Stomach (tissue), 19 donors: ENCODE measurements at regions of chr5 and their contacts with region 1.

Region 1: GRCh38 chr5:172454358-172455086 is at the start of gene SH3PXD2B:
- DNase-seq: peak; percentile 63 to 90
- H3K4me3 ChIP-seq: peak within 1 kb of the TSS; percentile 85 to 95 (median 89)
- H3K27ac ChIP-seq: peak within 1 kb of the TSS; percentile 80 to 94 (median 88)
- H3K4me1 ChIP-seq: peaks cover 15 to 56% (median 38%) of the 10 kb centered on the region in 4 donors
- H3K27me3 ChIP-seq: peaks cover 0 to 11% (median 0%) of the 10 kb centered on the region in 3 donors
- CTCF ChIP-seq: no peak
- EP300 ChIP-seq: no peak
- POLR2A ChIP-seq: no peak
- total RNA-seq, gene SH3PXD2B: 7.2 to 63.0 (median 35.1) TPM

Region 2: GRCh38 chr5:171850324-171851285 is 603.9 kb before region 1 on chr5:
- intact Hi-C with region 1: no loop called
- DNase-seq: peak in 1 of 2 donors; percentile 52
- H3K4me3 ChIP-seq: no peak overlapping the region
- H3K27ac ChIP-seq: no peak overlapping the region
- H3K4me1 ChIP-seq: no peaks in the 10 kb centered on the region
- H3K27me3 ChIP-seq: no peaks in the 10 kb centered on the region
- CTCF ChIP-seq: no peak
- EP300 ChIP-seq: no peak
- POLR2A ChIP-seq: no peak

Region 3: GRCh38 chr5:172564188-172564587 is 109.7 kb after region 1 on chr5:
- intact Hi-C with region 1: no loop called
- DNase-seq: peak; percentile 79 to 90
- H3K4me3 ChIP-seq: no peak overlapping the region
- H3K27ac ChIP-seq: peak overlapping the region in 1 of 5 donors; percentile 14
- H3K4me1 ChIP-seq: peaks cover 6 to 24% (median 16%) of the 10 kb centered on the region in 4 donors
- H3K27me3 ChIP-seq: no peaks in the 10 kb centered on the region
- CTCF ChIP-seq: no peak
- EP300 ChIP-seq: no peak
- POLR2A ChIP-seq: no peak

Region 4: DNA sequence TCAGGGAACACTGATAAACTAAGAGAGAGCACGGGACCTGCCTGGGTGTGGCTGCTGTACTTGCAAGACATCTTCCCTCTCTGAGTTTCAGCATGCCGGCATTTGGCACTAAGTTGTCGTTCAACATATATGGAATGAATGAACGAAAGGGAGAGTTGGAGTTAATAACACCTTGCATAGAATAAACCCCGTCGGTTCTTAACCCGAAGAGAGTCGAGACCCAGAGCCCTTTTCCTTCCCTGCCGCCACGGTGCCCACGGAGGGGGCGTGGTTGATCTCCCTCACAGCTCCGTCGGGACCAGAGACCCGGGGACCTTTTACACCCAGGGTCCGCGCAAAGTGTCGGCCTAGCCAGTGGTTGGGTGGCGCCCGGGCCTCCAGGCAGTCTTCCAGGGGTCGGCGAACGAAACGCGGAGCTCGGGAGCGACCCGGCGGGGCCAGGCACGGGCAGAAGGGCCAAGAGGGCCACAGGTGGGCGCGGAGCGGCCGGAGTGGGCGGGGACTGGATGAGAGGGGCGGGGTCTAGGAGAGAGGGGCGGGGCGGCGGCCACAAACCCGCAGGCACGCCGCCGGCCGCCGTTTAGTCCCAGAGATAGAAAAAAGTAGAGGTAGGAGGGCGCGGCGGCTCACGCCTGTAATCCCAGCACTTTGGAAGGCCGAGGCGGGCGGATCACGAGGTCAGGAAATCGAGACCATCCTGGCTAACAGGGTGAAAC is 504.0 kb after region 1 on chr5:
- intact Hi-C with region 1: loop called (anchors 10 kb)
- DNase-seq: peak; percentile 76 to 82
- H3K4me3 ChIP-seq: peak overlapping the region; percentile 81 to 94 (median 86)
- H3K27ac ChIP-seq: peak overlapping the region; percentile 77 to 91 (median 86)
- H3K4me1 ChIP-seq: peaks cover 17 to 44% (median 28%) of the 10 kb centered on the region in 4 donors
- H3K27me3 ChIP-seq: no peaks in the 10 kb centered on the region
- CTCF ChIP-seq: no peak
- EP300 ChIP-seq: no peak
- POLR2A ChIP-seq: no peak